Gastrocnemius medialis (tissue), 4 donors: ENCODE measurements at regions of chr9 and their contacts with region 1.

Region 1: DNA sequence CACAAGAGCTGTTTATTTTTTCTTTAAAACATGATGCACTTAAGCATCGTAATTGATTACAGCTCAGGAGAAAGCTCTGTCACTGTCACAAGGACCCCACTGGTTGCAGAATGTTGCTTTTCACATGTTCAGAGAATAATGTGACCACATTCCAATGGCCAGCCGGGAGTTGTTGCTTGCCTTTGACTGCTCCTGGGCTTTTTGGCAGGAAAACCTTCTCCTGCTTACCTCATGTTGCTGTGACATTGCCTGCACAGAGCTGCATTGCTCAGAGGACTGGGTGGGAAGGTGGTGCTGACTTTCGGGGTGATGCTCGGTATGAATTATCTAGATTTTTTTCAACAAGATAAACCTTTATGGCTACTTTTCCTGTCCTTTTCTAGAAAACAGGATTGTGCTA is 88.2 kb downstream of the PALM2AKAP2 start:
- DNase-seq: no peak
- ATAC-seq: no peak
- H3K4me3 ChIP-seq: peak overlapping the region in 1 of 4 donors; percentile 54
- H3K27ac ChIP-seq: peak overlapping the region in 1 of 4 donors; percentile 62
- H3K4me1 ChIP-seq: peaks cover 16% of the 10 kb centered on the region in 2 donors
- H3K27me3 ChIP-seq: no peaks in the 10 kb centered on the region
- CTCF ChIP-seq: no peak
- POLR2A ChIP-seq: no peak

Region 2: DNA sequence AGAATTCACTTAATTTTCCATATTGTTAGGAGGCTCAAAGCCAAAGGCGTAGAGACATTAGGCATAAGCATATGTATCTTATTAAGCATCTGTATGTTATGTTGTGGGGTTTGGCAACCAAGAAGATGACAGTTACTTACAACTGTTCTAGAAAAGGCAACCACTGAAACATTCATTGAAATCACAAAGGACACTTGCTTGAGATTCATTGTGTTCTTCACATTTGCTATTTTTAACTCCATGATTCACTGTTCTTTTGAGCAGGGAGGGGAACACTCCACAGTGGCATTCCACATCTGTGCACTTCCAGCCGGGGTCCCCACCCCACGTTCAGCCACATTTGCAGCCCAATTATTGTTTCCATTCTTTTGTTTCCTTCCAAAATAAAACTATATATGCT is 18.9 kb after region 1 on chr9:
- in situ Hi-C with region 1: no loop called
- intact Hi-C with region 1: loop called (anchors 1 kb)
- DNase-seq: no peak
- ATAC-seq: peak; percentile 86
- H3K4me3 ChIP-seq: no peak overlapping the region
- H3K27ac ChIP-seq: peak overlapping the region; percentile 56 to 79 (median 68)
- H3K4me1 ChIP-seq: peaks cover 28 to 31% of the 10 kb centered on the region in 2 donors
- H3K27me3 ChIP-seq: no peaks in the 10 kb centered on the region
- CTCF ChIP-seq: no peak
- POLR2A ChIP-seq: no peak